Adrenal gland (tissue), 19 donors: ENCODE measurements at regions of chr15 and their contacts with region 1.

Region 1: DNA sequence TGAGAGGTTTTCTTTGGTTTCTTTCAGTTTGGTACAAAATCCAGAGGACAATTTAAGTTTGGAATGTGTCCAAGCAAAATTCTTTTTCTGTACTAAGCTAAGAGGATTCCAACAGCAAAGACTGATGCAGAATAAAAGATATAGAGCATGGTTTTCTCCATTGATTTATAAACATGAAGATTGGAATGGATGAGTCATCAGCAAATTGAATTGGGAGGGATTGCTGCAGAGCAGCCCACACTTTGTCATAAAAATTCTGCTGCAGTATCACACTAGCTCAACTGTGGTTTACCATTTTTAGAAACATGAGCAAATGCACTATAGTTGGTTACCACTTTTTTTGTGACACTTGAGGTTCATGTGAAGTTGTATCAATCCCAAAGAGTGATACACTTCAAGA is 16.1 kb upstream of the LARP6 start:
- DNase-seq: no peak
- H3K4me3 ChIP-seq: no peak overlapping the region
- H3K27ac ChIP-seq: no peak overlapping the region
- H3K4me1 ChIP-seq: peaks cover 0 to 3% of the 10 kb centered on the region in 2 donors
- H3K27me3 ChIP-seq: no peaks in the 10 kb centered on the region
- CTCF ChIP-seq: no peak
- POLR2A ChIP-seq: no peak

Region 2: GRCh38 chr15:70799667-70800450 is 70.2 kb before region 1 on chr15:
- intact Hi-C with region 1: no loop called
- DNase-seq: peak in 3 of 7 donors; percentile 13 to 61 (median 42)
- H3K4me3 ChIP-seq: no peak overlapping the region
- H3K27ac ChIP-seq: peak overlapping the region in 2 of 5 donors; percentile 7 to 65
- H3K4me1 ChIP-seq: no peaks in the 10 kb centered on the region
- H3K27me3 ChIP-seq: no peaks in the 10 kb centered on the region
- CTCF ChIP-seq: no peak
- POLR2A ChIP-seq: no peak

Region 3: GRCh38 chr15:70826634-70827033 is 43.4 kb before region 1 on chr15:
- intact Hi-C with region 1: loop called in 1 of 2 experiments (anchors 5 kb)
- DNase-seq: peak in 5 of 7 donors; percentile 25 to 53 (median 28)
- H3K4me3 ChIP-seq: no peak overlapping the region
- H3K27ac ChIP-seq: no peak overlapping the region
- H3K4me1 ChIP-seq: peaks cover 0 to 5% of the 10 kb centered on the region in 2 donors
- H3K27me3 ChIP-seq: no peaks in the 10 kb centered on the region
- CTCF ChIP-seq: no peak
- POLR2A ChIP-seq: no peak

Region 4: GRCh38 chr15:71136159-71136783 is 266.2 kb after region 1 on chr15:
- intact Hi-C with region 1: no loop called
- DNase-seq: peak in 2 of 7 donors; percentile 28
- H3K4me3 ChIP-seq: no peak overlapping the region
- H3K27ac ChIP-seq: no peak overlapping the region
- H3K4me1 ChIP-seq: peaks cover 12 to 15% of the 10 kb centered on the region in 2 donors
- H3K27me3 ChIP-seq: no peaks in the 10 kb centered on the region
- CTCF ChIP-seq: no peak
- POLR2A ChIP-seq: no peak

Region 5: GRCh38 chr15:71251584-71252043 is 381.6 kb after region 1 on chr15:
- intact Hi-C with region 1: no loop called
- DNase-seq: peak in 6 of 7 donors; percentile 30 to 84 (median 42)
- H3K4me3 ChIP-seq: no peak overlapping the region
- H3K27ac ChIP-seq: peak overlapping the region; percentile 41 to 79 (median 49)
- H3K4me1 ChIP-seq: peaks cover 0 to 30% of the 10 kb centered on the region in 2 donors
- H3K27me3 ChIP-seq: no peaks in the 10 kb centered on the region
- CTCF ChIP-seq: no peak
- POLR2A ChIP-seq: no peak